ENCODE measurements at regions of chr17 and their contacts with region 1.

Region 1: GRCh38 chr17:43360739-43361505 is 37.9 kb upstream of the ARL4D start:
- DNase-seq: peak; percentile 94
- H3K4me3 Mint-ChIP-seq: peak overlapping the region; percentile 85
- H3K27ac Mint-ChIP-seq: peak overlapping the region; percentile 99
- H3K4me1 Mint-ChIP-seq: peaks cover 41% of the 10 kb centered on the region
- H3K27me3 Mint-ChIP-seq: peaks cover 3% of the 10 kb centered on the region

Region 2: DNA sequence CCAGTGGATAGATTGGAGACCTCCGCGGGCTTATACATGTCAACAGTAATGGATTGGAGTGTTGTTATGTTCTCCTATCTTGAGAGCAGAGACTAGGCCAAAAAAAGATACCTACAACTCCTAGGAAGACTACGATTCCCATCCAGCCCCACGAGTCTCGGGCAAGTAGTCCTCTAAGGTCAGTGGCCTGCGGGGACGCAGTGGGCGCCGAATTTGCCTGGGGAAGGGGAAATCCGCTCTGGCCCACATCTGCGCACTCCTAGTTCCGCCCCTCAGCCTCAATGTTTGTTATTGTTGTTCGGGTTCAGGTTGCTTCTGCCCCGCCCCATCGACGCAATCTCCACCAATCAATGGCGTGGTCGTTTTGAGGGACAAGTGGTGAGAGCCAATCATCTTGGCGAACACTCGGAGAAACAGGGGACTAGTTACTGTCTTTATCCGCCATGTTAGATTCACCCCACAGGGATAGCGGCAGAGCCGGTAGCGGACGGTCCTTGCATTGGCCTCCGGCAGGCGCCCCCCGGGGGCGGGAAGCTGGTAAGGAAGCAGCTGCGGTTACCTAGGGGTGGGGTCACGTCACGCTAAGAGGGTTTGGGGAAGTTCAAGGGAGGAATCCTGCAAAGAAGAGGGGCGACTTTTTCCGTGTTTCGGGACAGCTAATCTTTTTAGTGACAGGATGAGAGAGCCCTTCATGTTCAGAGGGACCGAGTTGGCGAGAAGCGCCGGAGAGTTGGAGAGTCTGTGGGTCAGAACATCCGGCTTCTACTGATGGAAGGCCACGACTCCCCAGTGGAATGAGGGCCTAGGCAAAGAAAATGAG is 189.9 kb before region 1 on chr17 and contains the start of gene NBR1:
- CTCF ChIA-PET with region 1: no interaction called
- POLR2A ChIA-PET with region 1: interaction called, 13 read pairs
- DNase-seq: peak; percentile 98
- H3K4me3 Mint-ChIP-seq: no peak within 1 kb of the TSS
- H3K27ac Mint-ChIP-seq: no peak within 1 kb of the TSS
- H3K4me1 Mint-ChIP-seq: peaks cover 39% of the 10 kb centered on the region
- H3K27me3 Mint-ChIP-seq: no peaks in the 10 kb centered on the region
- total RNA-seq, gene NBR1: 68.1 to 69.8 TPM

Region 3: GRCh38 chr17:43309505-43310332 is 51.2 kb before region 1 on chr17:
- CTCF ChIA-PET with region 1: no interaction called
- POLR2A ChIA-PET with region 1: interaction called, 163 read pairs
- DNase-seq: no peak
- H3K4me3 Mint-ChIP-seq: no peak overlapping the region
- H3K27ac Mint-ChIP-seq: no peak overlapping the region
- H3K4me1 Mint-ChIP-seq: peaks cover 7% of the 10 kb centered on the region
- H3K27me3 Mint-ChIP-seq: no peaks in the 10 kb centered on the region

Region 4: GRCh38 chr17:43338886-43339516 is 21.9 kb before region 1 on chr17:
- CTCF ChIA-PET with region 1: interaction called, 3 read pairs
- POLR2A ChIA-PET with region 1: interaction called, 33 read pairs
- DNase-seq: peak; percentile 63
- H3K4me3 Mint-ChIP-seq: no peak overlapping the region
- H3K27ac Mint-ChIP-seq: no peak overlapping the region
- H3K4me1 Mint-ChIP-seq: peaks cover 12% of the 10 kb centered on the region
- H3K27me3 Mint-ChIP-seq: no peaks in the 10 kb centered on the region

Region 5: DNA sequence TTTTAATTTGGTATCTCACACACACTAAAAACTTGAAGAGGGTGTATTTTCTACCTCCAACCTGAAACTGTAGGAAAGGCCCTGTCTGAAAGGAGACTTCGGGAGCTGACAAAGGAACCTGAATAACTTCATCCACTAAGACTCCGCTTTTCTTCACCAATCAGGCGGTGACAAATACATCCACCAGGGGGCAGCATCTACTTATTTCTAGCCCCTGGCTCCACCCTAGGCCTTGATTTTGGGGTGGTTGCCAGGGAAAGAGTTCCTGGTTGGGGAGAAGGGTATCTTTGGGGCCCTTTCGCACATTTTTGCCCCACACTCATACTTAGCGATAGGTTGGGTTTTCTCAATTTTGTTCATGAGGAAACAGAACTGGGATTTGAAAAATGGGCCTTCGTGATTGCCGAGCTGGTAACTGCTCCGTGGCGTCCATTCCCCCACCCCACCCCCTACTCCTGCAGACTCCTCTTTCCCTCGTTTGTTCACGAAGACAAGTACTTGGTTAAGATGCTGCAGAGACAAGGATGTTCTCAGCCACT is 33.1 kb after region 1 on chr17:
- CTCF ChIA-PET with region 1: interaction called, 15 read pairs
- POLR2A ChIA-PET with region 1: interaction called, 903 read pairs
- DNase-seq: peak; percentile 91
- H3K4me3 Mint-ChIP-seq: no peak overlapping the region
- H3K27ac Mint-ChIP-seq: peak overlapping the region; percentile 47
- H3K4me1 Mint-ChIP-seq: peaks cover 50% of the 10 kb centered on the region
- H3K27me3 Mint-ChIP-seq: no peaks in the 10 kb centered on the region